Left ventricle myocardium superior (tissue), 1 donor: ENCODE measurements at regions of chr4 and their contacts with region 1.

Region 1: DNA sequence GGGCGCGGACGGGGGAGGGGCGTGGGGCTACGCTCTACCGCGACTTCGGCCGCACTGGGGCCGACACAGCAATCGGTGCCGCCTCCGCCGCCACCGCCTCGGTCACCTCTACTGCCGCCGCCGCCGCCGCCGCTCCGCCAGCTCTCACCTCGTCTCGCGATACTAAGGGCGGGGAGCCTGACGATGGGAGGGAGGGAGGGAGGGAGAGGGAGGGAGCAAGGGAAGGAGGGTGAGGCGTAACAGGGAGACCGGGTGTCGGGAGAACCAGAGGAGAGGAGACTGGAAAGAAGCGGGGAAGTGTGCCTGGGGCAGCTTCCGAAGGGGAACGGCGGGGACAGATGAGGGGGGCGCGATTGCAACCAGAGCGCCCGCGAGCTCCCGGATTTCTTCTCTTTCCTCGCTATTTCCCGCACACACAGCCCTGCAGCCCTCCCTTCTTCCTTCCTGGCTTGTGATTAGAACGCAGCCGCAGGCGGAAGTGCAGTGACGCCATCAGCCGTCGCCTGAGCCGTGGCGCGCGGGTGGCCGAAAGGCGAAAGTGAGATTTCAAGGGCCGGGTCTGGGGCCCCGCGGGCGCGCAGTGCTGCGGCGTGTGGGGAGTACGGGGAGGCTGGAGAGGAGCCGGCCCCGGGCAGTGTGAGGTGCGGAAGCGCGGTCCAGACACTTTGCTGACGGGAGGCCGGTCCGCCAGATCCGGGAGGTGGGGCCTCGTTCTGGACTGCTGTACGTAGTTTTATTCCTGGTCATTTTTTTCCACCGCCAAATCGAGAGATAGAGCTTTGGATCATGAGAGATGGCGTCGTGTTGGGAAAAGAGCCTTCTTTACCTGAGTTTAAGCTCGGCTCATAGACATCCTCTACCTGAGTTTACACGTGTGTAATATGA is at the start of gene ANKRD17:
- DNase-seq: peak; percentile 94
- ATAC-seq: peak; percentile 91
- total RNA-seq, gene ANKRD17: 53.3 TPM

Region 2: GRCh38 chr4:72641611-72642010 is 617.3 kb before region 1 on chr4:
- intact Hi-C with region 1: no loop called
- DNase-seq: no peak
- ATAC-seq: no peak

Region 3: DNA sequence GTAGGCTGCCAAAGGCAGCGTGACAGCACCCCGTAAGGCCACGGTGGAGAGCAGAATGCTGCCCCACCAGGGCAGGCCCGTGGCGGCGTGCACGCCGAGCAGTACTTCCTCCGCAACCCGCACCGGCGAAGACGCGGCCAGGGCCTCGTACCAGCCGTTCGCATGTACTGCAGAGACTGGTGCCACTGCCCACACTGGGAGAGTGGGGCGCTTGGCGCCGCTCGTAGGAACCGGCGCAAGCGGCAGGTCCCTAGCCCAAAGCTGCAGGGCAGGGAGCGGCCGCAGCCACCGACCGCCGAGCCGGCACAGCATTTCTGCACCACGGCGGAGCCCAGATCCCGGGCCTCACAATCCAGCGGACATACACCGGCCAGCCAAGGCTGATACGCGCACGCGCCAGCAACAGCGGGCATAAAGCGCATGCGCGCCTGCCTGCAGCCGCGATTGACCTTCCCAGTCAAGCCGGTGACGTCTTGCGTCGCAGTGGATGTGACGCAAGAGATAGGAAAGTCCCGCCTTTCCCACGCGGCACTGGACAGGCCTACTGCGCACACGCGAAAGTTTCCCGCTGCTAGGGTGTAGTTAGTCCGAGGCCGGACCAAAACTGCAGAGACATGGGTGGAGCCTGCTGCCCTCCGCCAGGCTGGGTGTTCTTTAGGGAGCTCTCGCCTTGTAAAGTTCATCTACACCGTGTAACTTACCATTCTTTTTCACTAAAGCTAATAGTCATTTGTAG is 189.4 kb before region 1 on chr4 and contains the start of gene COX18:
- intact Hi-C with region 1: loop called (anchors 5 kb)
- DNase-seq: peak; percentile 99
- ATAC-seq: peak; percentile 97
- total RNA-seq, gene COX18: 18.8 TPM

Region 4: DNA sequence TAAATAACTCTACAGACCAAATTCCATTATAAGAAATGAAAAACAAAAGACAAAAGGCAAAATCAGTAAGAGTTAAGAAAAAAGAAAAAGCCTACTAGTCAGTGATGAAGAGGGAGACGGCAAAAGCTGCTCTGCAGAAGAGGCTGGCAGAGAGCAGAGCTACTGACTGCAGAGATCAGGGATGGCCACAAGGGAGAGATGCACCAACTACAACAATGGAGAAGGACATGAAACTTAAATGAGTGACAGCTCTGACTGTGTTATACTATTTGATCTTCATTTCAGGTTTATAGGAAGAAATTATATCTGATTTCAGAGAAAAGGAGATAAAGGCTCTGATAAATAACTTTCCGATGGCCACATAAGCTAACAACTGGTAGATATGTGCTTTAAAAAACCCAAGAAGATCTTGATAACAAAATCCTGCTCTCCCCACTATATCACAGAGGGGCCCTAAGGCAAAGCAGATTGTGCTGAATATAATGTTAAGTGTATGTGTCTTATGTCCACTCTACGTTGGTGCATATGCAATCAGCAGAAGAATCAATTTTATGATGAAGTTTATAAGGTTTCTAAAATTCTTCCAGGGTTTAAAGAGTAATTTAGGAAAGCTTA is 131.0 kb before region 1 on chr4:
- intact Hi-C with region 1: loop called (anchors 10 kb)
- DNase-seq: no peak
- ATAC-seq: peak; percentile 72

Region 5: GRCh38 chr4:73676861-73677323 is 418.0 kb after region 1 on chr4:
- intact Hi-C with region 1: no loop called
- DNase-seq: no peak
- ATAC-seq: peak; percentile 65